ENCODE measurements at regions of chr5 and their contacts with region 1.

Region 1: GRCh38 chr5:88690409-88691229 is 192.4 kb downstream of the MEF2C start:
- DNase-seq: no peak
- ATAC-seq: peak; percentile 93
- H3K4me3 ChIP-seq: peak overlapping the region; percentile 20; the same call in 1 of the 2 replicates
- H3K27ac ChIP-seq: no peak overlapping the region
- H3K4me1 ChIP-seq: no peaks in the 10 kb centered on the region; the same call in 1 of the 2 replicates
- H3K27me3 ChIP-seq: peaks cover 27 to 40% of the 10 kb centered on the region in 2 experiments
- CTCF ChIP-seq: peak; percentile 96 to 98 (median 97)
- EP300 ChIP-seq: no peak
- POLR2A ChIP-seq: no peak
- RAD21 ChIP-seq: peak; percentile 84

Region 2: DNA sequence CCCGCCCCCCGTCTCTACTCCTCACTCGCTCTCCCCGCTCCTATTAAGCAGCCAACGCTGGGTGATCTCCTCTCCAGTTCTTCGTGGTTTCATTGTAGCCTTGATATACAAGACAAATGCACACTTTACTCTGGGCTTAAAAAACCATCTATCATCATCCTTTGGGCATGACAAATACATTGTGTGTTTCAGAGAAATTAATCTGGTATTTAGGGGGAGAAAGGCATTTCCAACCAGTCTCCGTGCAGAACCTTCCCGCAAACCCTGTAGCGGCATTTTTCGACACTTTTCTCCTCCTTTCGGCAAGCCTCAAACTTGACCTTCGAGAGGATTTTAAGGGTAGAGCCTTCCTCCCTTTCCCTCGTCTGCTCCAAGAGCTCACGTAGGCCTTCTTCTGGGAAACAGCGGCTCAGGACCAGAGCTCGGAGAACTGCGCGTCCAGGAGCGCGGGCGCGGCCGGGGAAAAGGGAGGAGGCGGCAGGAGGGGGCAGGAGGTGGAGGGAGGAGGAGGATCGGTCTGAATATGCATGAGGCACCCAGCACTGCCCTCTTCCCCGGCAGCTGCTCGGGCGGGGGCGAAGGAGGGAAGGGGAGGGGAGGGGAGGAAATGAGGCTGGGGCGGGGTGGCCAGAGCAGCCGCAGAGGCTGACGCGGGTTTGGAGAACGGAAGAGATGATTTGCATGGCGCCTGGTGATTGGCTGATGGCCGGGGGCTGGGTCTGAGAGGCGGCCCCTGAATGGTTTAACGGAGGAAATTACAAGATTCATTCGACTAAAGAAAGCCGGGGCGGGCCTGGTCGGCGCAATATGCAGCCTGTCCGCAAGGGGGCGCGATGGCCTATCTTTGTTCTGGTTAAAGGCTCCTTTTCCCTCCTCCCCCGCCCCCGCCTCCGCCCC is 549.5 kb before region 1 on chr5:
- CTCF ChIA-PET with region 1: interaction called, 10 read pairs
- POLR2A ChIA-PET with region 1: no interaction called
- RAD21 ChIA-PET with region 1: interaction called, 5 read pairs
- SMC1A ChIA-PET with region 1: no interaction called
- in situ Hi-C with region 1: loop called (anchors 5 kb)
- intact Hi-C with region 1: no loop called
- DNase-seq: peak; percentile 8
- ATAC-seq: peak; percentile 91
- H3K4me3 ChIP-seq: no peak overlapping the region
- H3K27ac ChIP-seq: no peak overlapping the region
- H3K4me1 ChIP-seq: no peaks in the 10 kb centered on the region
- H3K27me3 ChIP-seq: peaks cover 11 to 29% of the 10 kb centered on the region in 2 experiments
- CTCF ChIP-seq: peak; percentile 24 to 59 (median 58); a peak in 4 of 6 replicates
- EP300 ChIP-seq: no peak
- POLR2A ChIP-seq: no peak
- RAD21 ChIP-seq: peak; percentile 47; the same call in 1 of the 2 replicates

Region 3: DNA sequence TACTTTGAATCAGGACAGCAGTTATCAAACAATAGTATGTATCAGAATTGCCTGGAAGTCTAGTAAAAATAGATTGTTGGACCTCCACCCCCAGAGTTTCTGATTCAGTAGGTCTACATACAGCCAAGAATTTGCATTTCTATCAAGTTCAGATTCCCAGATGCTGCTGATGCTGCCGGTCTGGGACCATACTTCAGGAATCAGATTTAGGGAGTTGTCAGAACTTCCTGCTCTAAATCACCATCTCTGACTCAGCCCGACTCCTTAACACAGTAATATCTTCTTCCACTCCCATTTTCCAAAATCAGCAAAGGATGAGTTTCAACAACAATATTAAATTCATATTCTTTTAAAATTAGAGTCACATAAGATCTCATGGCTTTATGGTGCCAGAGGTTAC is 194.8 kb before region 1 on chr5:
- CTCF ChIA-PET with region 1: no interaction called
- POLR2A ChIA-PET with region 1: no interaction called
- RAD21 ChIA-PET with region 1: no interaction called
- SMC1A ChIA-PET with region 1: no interaction called
- in situ Hi-C with region 1: no loop called
- intact Hi-C with region 1: no loop called
- DNase-seq: no peak
- ATAC-seq: no peak
- H3K4me3 ChIP-seq: no peak overlapping the region
- H3K27ac ChIP-seq: no peak overlapping the region
- H3K4me1 ChIP-seq: no peaks in the 10 kb centered on the region
- H3K27me3 ChIP-seq: no peaks in the 10 kb centered on the region; a peak in 1 of 4 replicates
- CTCF ChIP-seq: no peak
- EP300 ChIP-seq: no peak
- POLR2A ChIP-seq: no peak
- RAD21 ChIP-seq: no peak

Region 4: GRCh38 chr5:88518131-88519016 is 172.2 kb before region 1 on chr5:
- CTCF ChIA-PET with region 1: no interaction called
- POLR2A ChIA-PET with region 1: no interaction called
- RAD21 ChIA-PET with region 1: no interaction called
- SMC1A ChIA-PET with region 1: no interaction called
- in situ Hi-C with region 1: no loop called
- intact Hi-C with region 1: no loop called
- DNase-seq: no peak
- ATAC-seq: peak; percentile 72
- H3K4me3 ChIP-seq: no peak overlapping the region
- H3K27ac ChIP-seq: no peak overlapping the region
- H3K4me1 ChIP-seq: no peaks in the 10 kb centered on the region
- H3K27me3 ChIP-seq: no peaks in the 10 kb centered on the region
- CTCF ChIP-seq: no peak
- EP300 ChIP-seq: no peak
- POLR2A ChIP-seq: no peak
- RAD21 ChIP-seq: no peak

Region 5: GRCh38 chr5:88666761-88667495 is 23.7 kb before region 1 on chr5:
- CTCF ChIA-PET with region 1: interaction called, 7 read pairs
- POLR2A ChIA-PET with region 1: interaction called, 3 read pairs
- RAD21 ChIA-PET with region 1: interaction called, 10 read pairs
- SMC1A ChIA-PET with region 1: no interaction called
- in situ Hi-C with region 1: no loop called
- intact Hi-C with region 1: no loop called
- DNase-seq: no peak
- ATAC-seq: peak; percentile 84
- H3K4me3 ChIP-seq: peak overlapping the region; percentile 88
- H3K27ac ChIP-seq: no peak overlapping the region
- H3K4me1 ChIP-seq: peaks cover 6% of the 10 kb centered on the region
- H3K27me3 ChIP-seq: peaks cover 0 to 34% of the 10 kb centered on the region in 2 experiments; a peak in 3 of 4 replicates
- CTCF ChIP-seq: no peak
- EP300 ChIP-seq: no peak
- POLR2A ChIP-seq: no peak
- RAD21 ChIP-seq: no peak

Region 6: DNA sequence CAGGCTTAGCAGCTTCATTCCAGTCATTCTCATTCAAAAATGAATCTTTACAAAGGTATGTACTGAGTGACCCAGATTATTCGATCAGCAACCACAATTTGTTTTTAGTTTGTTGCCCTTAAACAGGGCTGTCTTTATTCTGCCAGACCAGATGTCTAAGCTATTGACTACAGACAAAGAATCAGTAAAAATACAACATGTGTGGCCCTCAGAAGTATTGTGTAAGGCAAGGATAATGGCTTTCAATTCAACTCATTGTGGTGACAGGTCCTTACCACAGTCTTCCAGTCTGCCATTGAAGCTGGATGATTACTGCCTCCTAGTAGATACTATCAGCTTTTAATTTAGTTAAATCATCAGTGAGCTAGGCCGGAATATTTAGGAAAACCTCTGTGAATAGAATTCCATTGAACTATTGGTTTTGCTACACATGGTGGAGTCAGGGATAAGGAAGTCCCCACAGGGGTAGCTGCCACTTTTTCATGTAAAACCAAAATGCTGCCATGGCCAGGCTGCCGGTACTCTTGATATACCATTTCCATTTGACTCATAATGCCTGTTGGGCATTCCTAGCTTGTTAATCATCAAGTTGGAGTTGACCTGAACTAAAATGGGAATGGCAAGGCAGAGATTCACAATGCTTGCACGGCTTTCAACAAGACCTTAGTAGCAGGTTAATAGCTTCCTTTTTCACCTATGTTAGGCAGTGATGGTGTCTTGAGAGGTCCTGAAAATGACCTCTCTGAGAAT is 16.8 kb after region 1 on chr5:
- CTCF ChIA-PET with region 1: interaction called, 8 read pairs
- POLR2A ChIA-PET with region 1: no interaction called
- RAD21 ChIA-PET with region 1: interaction called, 3 read pairs
- SMC1A ChIA-PET with region 1: interaction called, 10 read pairs
- in situ Hi-C with region 1: no loop called
- intact Hi-C with region 1: no loop called
- DNase-seq: no peak
- ATAC-seq: no peak
- H3K4me3 ChIP-seq: no peak overlapping the region
- H3K27ac ChIP-seq: no peak overlapping the region
- H3K4me1 ChIP-seq: no peaks in the 10 kb centered on the region
- H3K27me3 ChIP-seq: no peaks in the 10 kb centered on the region
- CTCF ChIP-seq: no peak
- EP300 ChIP-seq: no peak
- POLR2A ChIP-seq: no peak
- RAD21 ChIP-seq: no peak

Region 7: GRCh38 chr5:88845081-88845697 is 154.6 kb after region 1 on chr5:
- CTCF ChIA-PET with region 1: no interaction called
- POLR2A ChIA-PET with region 1: no interaction called
- RAD21 ChIA-PET with region 1: no interaction called
- SMC1A ChIA-PET with region 1: no interaction called
- in situ Hi-C with region 1: no loop called
- intact Hi-C with region 1: no loop called
- DNase-seq: peak; percentile 73
- ATAC-seq: peak; percentile 82
- H3K4me3 ChIP-seq: no peak overlapping the region
- H3K27ac ChIP-seq: peak overlapping the region; percentile 56
- H3K4me1 ChIP-seq: peaks cover 3% of the 10 kb centered on the region; the same call in 1 of the 2 replicates
- H3K27me3 ChIP-seq: no peaks in the 10 kb centered on the region
- CTCF ChIP-seq: no peak
- EP300 ChIP-seq: peak; percentile 77 to 98
- POLR2A ChIP-seq: no peak
- RAD21 ChIP-seq: no peak

Measured in GM12878 (cell line).